ENCODE measurements at regions of chr18 and their contacts with region 1.

Region 1: GRCh38 chr18:14097761-14098160 is 34.5 kb downstream of the ZNF519 start:
- DNase-seq: no peak
- ATAC-seq: peak; percentile 22
- H3K4me3 Mint-ChIP-seq: no peak overlapping the region
- H3K27ac Mint-ChIP-seq: peak overlapping the region; percentile 40
- H3K4me1 Mint-ChIP-seq: peaks cover 45% of the 10 kb centered on the region
- H3K27me3 Mint-ChIP-seq: no peaks in the 10 kb centered on the region

Region 2: DNA sequence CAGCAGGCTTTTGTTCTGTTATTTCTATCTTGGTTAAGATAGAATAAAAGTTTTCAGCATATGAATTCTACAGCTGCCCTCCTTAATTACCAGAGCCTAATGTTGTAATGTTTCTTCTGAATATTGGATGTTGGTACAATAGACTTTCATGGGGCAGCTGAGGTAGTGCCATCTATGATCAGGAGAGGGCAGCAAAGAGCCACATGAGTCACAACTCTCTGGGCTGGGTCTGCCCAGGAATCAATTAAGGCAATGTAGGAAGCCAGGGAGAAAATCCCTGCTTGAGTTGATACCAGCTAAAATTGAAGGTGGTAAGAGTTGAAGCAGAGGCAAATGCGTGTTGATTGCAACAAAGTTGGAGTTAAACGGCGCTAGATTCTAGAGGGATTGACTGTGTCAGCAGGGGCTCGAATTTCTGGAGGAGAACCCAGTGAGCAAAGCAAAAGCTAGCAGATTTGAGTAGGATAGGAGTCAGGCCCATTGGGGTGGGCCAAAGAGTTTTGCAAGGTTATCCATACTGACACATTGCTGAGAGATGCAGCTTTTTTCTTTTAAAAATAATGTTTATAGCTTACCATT is 284.4 kb before region 1 on chr18:
- CTCF ChIA-PET with region 1: no interaction called
- DNase-seq: peak; percentile 72
- ATAC-seq: peak; percentile 82
- H3K4me3 Mint-ChIP-seq: no peak overlapping the region
- H3K27ac Mint-ChIP-seq: no peak overlapping the region
- H3K4me1 Mint-ChIP-seq: no peaks in the 10 kb centered on the region
- H3K27me3 Mint-ChIP-seq: peaks cover 23% of the 10 kb centered on the region

Region 3: DNA sequence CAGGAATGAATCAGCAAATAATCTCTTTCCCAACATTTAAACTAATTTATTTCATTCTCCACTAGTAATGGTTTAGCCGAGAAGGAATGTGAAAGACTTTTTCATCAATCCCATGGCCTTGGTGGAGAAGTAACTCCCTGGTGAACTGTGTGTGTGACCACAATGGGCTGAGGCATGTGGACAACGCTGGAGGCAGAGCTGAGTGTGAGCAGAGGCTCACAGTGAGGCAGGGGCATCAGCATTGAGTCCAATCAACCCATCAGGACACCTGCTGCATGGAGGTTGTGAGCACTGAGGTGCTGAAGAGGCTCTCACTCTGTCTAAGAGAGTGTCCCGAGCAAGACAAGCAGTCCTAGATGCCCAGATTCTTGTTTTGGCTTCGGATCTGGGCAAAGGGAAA is 44.1 kb before region 1 on chr18:
- CTCF ChIA-PET with region 1: no interaction called
- DNase-seq: no peak
- ATAC-seq: no peak
- H3K4me3 Mint-ChIP-seq: no peak overlapping the region
- H3K27ac Mint-ChIP-seq: no peak overlapping the region
- H3K4me1 Mint-ChIP-seq: no peaks in the 10 kb centered on the region
- H3K27me3 Mint-ChIP-seq: no peaks in the 10 kb centered on the region

Region 4: DNA sequence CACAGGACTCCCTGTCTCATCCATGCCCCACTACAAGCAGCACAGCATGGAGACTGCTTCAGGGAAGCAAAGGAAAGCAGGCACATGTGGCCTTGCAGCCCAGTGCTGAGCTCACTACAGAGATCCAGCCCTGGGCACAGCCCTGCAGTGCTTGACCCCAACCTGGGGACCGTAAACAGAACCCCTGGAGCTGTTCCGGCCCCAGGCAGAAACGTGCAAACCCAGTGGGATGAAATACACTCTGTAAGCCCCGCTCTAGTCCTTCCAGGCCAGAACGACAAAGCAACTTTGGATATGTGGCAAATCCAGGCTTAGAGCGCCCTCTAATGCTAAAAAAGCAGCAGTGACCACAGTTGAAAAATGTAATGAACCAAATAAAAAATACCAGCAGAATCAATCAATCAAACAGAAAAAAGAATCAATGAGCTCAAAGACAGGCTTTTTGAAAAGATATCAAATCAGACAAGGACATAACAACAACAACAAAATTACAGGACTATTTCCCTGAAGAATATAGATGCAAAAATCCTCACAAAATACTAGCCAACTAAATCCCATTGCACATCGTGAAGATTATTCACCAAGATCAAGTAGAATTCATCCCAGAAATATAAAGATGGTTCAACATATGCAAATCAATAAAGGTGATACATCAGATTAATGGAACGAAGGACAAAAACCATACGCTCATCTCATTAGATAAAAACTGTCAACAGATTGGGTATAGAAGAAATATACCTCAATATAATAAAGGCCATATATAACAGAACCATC is 11.1 kb before region 1 on chr18:
- CTCF ChIA-PET with region 1: interaction called, 11 read pairs
- DNase-seq: no peak
- ATAC-seq: peak; percentile 55
- H3K4me3 Mint-ChIP-seq: no peak overlapping the region
- H3K27ac Mint-ChIP-seq: no peak overlapping the region
- H3K4me1 Mint-ChIP-seq: no peaks in the 10 kb centered on the region
- H3K27me3 Mint-ChIP-seq: no peaks in the 10 kb centered on the region

Measured in activated CD8-positive, alpha-beta memory T cell treated with anti-CD3 and anti-CD28 coated beads, Interleukin-2, amount 10 ng/mL, durations not matched to agents 7 days and 5 days (primary cell).